B cell (primary cell): ENCODE measurements at regions of chr15 and their contacts with region 1.

Region 1: GRCh38 chr15:65304389-65305144 is at the start of gene RNU5B-1:
- DNase-seq: peak; percentile 94
- ATAC-seq: peak; percentile 77
- H3K4me3 ChIP-seq: peak within 1 kb of the TSS; percentile 56 to 83 (median 67)
- H3K4me3 Mint-ChIP-seq: peak within 1 kb of the TSS; percentile 96
- H3K27ac ChIP-seq: peak within 1 kb of the TSS; percentile 95 to 98
- H3K27ac Mint-ChIP-seq: peak within 1 kb of the TSS; percentile 93
- H3K4me1 ChIP-seq: peaks cover 7 to 19% of the 10 kb centered on the region in 2 donors
- H3K4me1 Mint-ChIP-seq: peaks cover 28% of the 10 kb centered on the region
- H3K27me3 ChIP-seq: no peaks in the 10 kb centered on the region
- H3K27me3 Mint-ChIP-seq: no peaks in the 10 kb centered on the region
- CTCF ChIP-seq: peak; percentile 96
- total RNA-seq, gene RNU5B-1: 17.4 and 21.7 TPM in 2 replicates

Region 2: GRCh38 chr15:65133548-65134200 is 170.9 kb before region 1 on chr15 and contains the start of gene PDCD7:
- CTCF ChIA-PET with region 1: no interaction called
- POLR2A ChIA-PET with region 1: no interaction called
- intact Hi-C with region 1: loop called (anchors 1 kb)
- DNase-seq: peak; percentile 92
- ATAC-seq: peak; percentile 93
- H3K4me3 ChIP-seq: peak within 1 kb of the TSS; percentile 55 to 90 (median 67)
- H3K4me3 Mint-ChIP-seq: peak within 1 kb of the TSS; percentile 93
- H3K27ac ChIP-seq: peak within 1 kb of the TSS; percentile 53 to 88
- H3K27ac Mint-ChIP-seq: peak within 1 kb of the TSS; percentile 95
- H3K4me1 ChIP-seq: peaks cover 13 to 19% of the 10 kb centered on the region in 2 donors
- H3K4me1 Mint-ChIP-seq: peaks cover 28% of the 10 kb centered on the region
- H3K27me3 ChIP-seq: no peaks in the 10 kb centered on the region
- H3K27me3 Mint-ChIP-seq: no peaks in the 10 kb centered on the region
- CTCF ChIP-seq: no peak
- total RNA-seq, gene PDCD7: 43.2 and 47.0 TPM in 2 replicates

Region 3: DNA sequence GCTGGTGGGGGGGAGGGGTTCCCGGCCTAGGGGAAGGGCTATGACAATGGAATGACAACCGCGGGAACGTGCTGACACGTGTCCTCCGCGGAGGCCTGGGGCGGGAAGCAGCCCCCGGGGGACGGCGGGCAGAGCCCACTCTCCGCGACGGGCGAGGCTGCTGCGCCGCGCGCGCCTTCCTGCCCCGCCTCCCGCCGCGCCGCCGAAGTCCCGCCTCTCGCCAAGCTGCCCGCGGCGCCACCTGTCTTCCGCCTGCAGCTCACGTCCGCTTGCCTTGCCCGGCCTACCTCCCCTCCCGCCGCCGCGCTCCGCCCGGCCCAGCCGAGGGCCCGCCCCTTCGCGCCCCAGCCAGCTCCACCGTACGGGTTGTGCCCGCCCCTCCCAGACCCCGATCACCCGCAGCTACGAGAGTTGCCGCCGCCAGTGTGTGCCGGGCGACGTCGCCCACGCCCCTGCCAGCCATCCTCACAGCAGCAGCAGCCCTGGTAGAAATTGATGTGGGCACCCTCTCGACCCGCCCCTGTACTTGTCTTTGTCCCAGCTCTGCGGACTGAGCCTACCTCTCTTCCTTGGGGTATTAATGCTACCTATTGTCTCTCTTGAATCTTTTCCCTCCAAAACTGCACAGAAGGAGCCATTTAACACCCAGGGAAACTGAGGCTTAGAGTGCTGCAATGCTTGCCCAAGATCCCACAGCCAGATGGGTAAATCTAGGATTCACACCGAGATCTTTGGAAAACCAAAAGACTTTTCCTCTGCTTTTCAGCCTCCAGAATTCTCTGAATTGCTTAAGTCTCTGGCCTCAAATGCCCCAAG is 17.7 kb before region 1 on chr15 and contains the start of gene PARP16:
- CTCF ChIA-PET with region 1: interaction called, 25 read pairs
- POLR2A ChIA-PET with region 1: interaction called, 25 read pairs
- intact Hi-C with region 1: loop called (anchors 1 kb)
- DNase-seq: peak; percentile 95
- ATAC-seq: peak; percentile 95
- H3K4me3 ChIP-seq: peak within 1 kb of the TSS; percentile 67 to 89 (median 84)
- H3K4me3 Mint-ChIP-seq: peak within 1 kb of the TSS; percentile 89
- H3K27ac ChIP-seq: peak within 1 kb of the TSS; percentile 83 to 91
- H3K27ac Mint-ChIP-seq: peak within 1 kb of the TSS; percentile 89
- H3K4me1 ChIP-seq: peaks cover 18 to 19% of the 10 kb centered on the region in 2 donors
- H3K4me1 Mint-ChIP-seq: peaks cover 37% of the 10 kb centered on the region
- H3K27me3 ChIP-seq: no peaks in the 10 kb centered on the region
- H3K27me3 Mint-ChIP-seq: no peaks in the 10 kb centered on the region
- CTCF ChIP-seq: no peak
- total RNA-seq, gene PARP16: 18.2 and 21.6 TPM in 2 replicates

Region 4: GRCh38 chr15:65318870-65319356 is 14.3 kb after region 1 on chr15:
- CTCF ChIA-PET with region 1: interaction called, 26 read pairs
- POLR2A ChIA-PET with region 1: interaction called, 7 read pairs
- intact Hi-C with region 1: no loop called
- DNase-seq: peak; percentile 81
- ATAC-seq: peak; percentile 99
- H3K4me3 ChIP-seq: no peak overlapping the region
- H3K4me3 Mint-ChIP-seq: no peak overlapping the region
- H3K27ac ChIP-seq: no peak overlapping the region
- H3K27ac Mint-ChIP-seq: no peak overlapping the region
- H3K4me1 ChIP-seq: no peaks in the 10 kb centered on the region
- H3K4me1 Mint-ChIP-seq: no peaks in the 10 kb centered on the region
- H3K27me3 ChIP-seq: peaks cover 0 to 6% (median 0%) of the 10 kb centered on the region in 4 experiments
- H3K27me3 Mint-ChIP-seq: peaks cover 16% of the 10 kb centered on the region
- CTCF ChIP-seq: peak; percentile 91

Region 5: GRCh38 chr15:65377104-65377975 is 72.8 kb after region 1 on chr15:
- CTCF ChIA-PET with region 1: no interaction called
- POLR2A ChIA-PET with region 1: no interaction called
- intact Hi-C with region 1: no loop called
- DNase-seq: peak; percentile 46
- ATAC-seq: peak; percentile 24
- H3K4me3 ChIP-seq: peak overlapping the region in 4 of 5 experiments; percentile 21 to 57 (median 42)
- H3K4me3 Mint-ChIP-seq: peak overlapping the region; percentile 84
- H3K27ac ChIP-seq: no peak overlapping the region
- H3K27ac Mint-ChIP-seq: no peak overlapping the region
- H3K4me1 ChIP-seq: peaks cover 10 to 17% of the 10 kb centered on the region in 2 donors
- H3K4me1 Mint-ChIP-seq: peaks cover 18% of the 10 kb centered on the region
- H3K27me3 ChIP-seq: peaks cover 0 to 73% (median 24%) of the 10 kb centered on the region in 4 experiments
- H3K27me3 Mint-ChIP-seq: peaks cover 69% of the 10 kb centered on the region
- CTCF ChIP-seq: no peak

Region 6: DNA sequence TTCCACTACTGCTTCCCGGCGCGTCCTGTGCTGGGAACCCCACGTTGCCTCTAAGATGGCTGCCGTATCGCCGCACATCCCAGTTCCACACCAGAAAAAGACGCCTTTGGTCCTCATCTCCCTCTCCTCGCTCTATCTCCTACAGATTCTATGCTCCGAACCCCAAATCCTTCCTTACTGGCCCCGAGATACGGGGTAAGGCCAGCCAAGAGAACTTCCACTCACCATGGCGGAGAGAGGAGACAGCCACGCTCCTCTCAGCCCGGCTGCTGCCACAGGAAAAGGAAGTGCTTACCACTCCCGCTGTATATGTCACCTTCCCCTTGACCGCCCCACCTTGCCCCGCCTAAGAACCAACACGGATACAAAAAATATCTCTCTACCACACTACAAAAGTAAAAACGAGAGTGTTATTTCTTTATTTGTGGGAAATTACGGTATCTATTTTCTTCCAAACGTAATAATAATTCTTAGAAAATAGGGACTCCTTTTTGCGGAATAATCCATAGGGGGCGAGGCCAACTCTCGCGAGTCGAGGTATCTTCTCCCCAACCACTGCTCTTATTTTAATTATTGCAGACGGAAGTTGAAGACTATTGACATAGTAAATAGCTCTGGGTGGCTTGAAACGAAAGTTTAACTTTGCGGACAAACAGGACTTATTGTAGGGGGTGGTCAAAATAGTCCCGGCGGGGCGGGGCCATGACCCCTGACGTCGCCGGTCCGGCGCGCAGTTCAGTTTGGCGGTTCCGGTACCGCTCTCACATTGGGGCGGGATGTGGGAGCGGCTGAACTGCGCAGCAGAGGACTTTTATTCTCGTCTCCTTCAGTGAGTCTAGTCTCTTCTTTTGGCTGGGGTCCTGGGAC is 1200.2 kb after region 1 on chr15 and contains the starts of genes RPL4 and ZWILCH:
- CTCF ChIA-PET with region 1: no interaction called
- POLR2A ChIA-PET with region 1: no interaction called
- intact Hi-C with region 1: loop called (anchors 5 kb)
- DNase-seq: peak; percentile 93
- ATAC-seq: peak; percentile 85
- H3K4me3 ChIP-seq: peak within 1 kb of the TSS; percentile 81 to 99 (median 85)
- H3K4me3 Mint-ChIP-seq: peak within 1 kb of the TSS; percentile 99
- H3K27ac ChIP-seq: peak within 1 kb of the TSS; percentile 83 to 90
- H3K27ac Mint-ChIP-seq: peak within 1 kb of the TSS; percentile 98
- H3K4me1 ChIP-seq: peaks cover 21 to 26% of the 10 kb centered on the region in 2 donors
- H3K4me1 Mint-ChIP-seq: peaks cover 42% of the 10 kb centered on the region
- H3K27me3 ChIP-seq: no peaks in the 10 kb centered on the region
- H3K27me3 Mint-ChIP-seq: no peaks in the 10 kb centered on the region
- CTCF ChIP-seq: no peak
- total RNA-seq, gene RPL4: 2,389 and 2,546 TPM in 2 replicates
- total RNA-seq, gene ZWILCH: 11.3 and 12.6 TPM in 2 replicates